ENCODE measurements at regions of chr16 and their contacts with region 1.

Region 1: GRCh38 chr16:1964506-1965395 is at the start of gene RPS2:
- H3K4me3 ChIP-seq: peak within 1 kb of the TSS; percentile 94
- H3K27ac ChIP-seq: peak within 1 kb of the TSS; percentile 100
- H3K4me1 ChIP-seq: no peaks in the 10 kb centered on the region; the same call in 1 of the 2 replicates
- CTCF ChIP-seq: no peak; the same call in 1 of the 2 replicates

Region 2: GRCh38 chr16:1782352-1783091 is 182.2 kb before region 1 on chr16 and contains the starts of genes NUBP2 and SPSB3:
- CTCF ChIA-PET with region 1: no interaction called
- POLR2A ChIA-PET with region 1: interaction called, 41 read pairs
- H3K4me3 ChIP-seq: peak within 1 kb of the TSS; percentile 90
- H3K27ac ChIP-seq: peak within 1 kb of the TSS; percentile 87
- H3K4me1 ChIP-seq: peaks cover 6% of the 10 kb centered on the region
- CTCF ChIP-seq: no peak

Region 3: GRCh38 chr16:1923299-1924034 is 41.3 kb before region 1 on chr16:
- CTCF ChIA-PET with region 1: interaction called, 4 read pairs
- POLR2A ChIA-PET with region 1: interaction called, 14 read pairs
- H3K4me3 ChIP-seq: no peak overlapping the region
- H3K27ac ChIP-seq: no peak overlapping the region; the same call in 1 of the 2 replicates
- H3K4me1 ChIP-seq: no peaks in the 10 kb centered on the region; the same call in 1 of the 2 replicates
- CTCF ChIP-seq: peak; percentile 90

Region 4: DNA sequence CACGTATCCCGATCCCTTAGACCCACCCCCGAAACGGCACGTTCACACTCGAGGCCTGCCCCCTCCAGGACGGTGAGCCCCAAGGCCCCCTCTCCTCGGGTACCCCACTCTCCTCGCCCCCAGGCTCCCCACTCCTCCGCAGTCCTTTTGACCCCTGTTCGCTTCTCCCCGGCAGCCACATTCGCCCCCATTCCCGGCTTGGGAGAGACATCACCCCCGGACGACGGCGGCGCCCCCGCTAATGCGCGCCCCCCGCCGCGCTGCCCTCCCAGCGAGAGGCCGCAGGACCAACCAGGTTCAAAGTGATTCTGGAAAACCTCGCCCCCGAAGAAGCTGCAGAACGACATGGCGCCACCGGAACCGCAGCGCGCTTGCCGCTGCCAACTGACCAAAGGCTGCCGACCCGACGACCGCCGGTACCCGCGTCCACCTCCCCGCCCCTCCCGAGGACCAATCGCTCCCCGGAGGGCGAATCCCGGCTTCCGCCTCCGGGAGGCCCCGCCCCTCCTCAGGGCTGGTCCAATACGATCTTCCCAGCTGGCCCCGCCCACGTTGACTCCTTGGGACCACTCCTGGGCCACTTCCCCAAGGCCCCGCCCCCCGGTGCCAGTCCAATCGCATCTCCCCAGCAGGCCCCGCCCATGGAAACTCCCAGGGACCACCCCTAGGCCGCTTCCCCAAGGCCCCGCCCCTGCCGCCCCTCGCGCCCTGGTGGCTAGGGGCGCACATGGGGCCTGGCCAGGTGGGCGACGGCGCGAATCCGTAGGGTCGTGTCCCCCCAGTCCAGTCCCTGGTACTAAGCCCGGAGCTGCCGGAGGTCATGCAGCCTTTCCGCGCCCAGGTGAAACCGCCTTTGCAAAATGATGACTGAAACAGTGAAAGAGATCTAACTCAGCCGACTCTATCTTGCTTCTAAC is 21.7 kb before region 1 on chr16 and contains the start of gene MSRB1:
- CTCF ChIA-PET with region 1: no interaction called
- POLR2A ChIA-PET with region 1: interaction called, 33 read pairs
- H3K4me3 ChIP-seq: peak within 1 kb of the TSS; percentile 67
- H3K27ac ChIP-seq: no peak within 1 kb of the TSS; the same call in 1 of the 2 replicates
- H3K4me1 ChIP-seq: no peaks in the 10 kb centered on the region
- CTCF ChIP-seq: peak; percentile 48; the same call in 1 of the 2 replicates

Region 5: DNA sequence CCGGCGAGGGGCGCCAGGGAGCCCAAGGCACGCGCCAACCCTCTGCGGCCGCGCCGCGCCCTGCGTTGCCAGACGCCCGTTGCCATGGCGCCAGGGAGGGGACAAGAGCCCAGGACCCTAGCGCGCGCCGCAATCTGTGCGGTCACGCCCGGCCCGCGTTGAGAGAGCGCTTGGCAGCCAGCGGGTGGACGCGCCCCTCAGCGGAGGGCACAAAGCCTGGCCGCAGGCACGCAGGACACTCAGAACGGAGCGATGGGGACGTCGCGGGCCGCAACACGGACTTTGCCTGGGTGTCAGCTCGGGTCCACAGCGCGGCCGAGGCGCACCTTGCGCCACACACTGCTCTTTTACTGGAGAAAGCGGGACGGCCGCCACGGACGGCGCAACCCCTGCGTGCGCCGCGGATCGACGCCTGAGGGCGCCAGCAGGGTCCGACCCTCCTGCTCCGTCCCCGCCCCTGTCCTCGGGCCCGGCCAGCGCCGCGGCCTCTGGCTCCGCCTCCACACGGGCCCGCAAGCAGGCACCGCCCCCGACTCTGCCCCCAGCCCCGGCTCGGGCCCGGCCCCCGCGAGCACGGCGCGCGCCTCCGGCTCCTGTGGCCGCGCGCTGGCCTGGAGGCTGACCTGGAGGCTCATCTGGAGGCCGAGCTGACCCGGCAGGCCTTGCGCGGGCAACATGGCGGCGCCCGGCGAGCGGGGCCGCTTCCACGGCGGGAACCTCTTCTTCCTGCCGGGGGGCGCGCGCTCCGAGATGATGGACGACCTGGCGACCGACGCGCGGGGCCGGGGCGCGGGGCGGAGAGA is 19.0 kb after region 1 on chr16 and contains the start of gene GFER:
- CTCF ChIA-PET with region 1: interaction called, 3 read pairs
- POLR2A ChIA-PET with region 1: interaction called, 76 read pairs
- H3K4me3 ChIP-seq: peak within 1 kb of the TSS; percentile 73
- H3K27ac ChIP-seq: peak within 1 kb of the TSS; percentile 83
- H3K4me1 ChIP-seq: peaks cover 7% of the 10 kb centered on the region; the same call in 1 of the 2 replicates
- CTCF ChIP-seq: peak; percentile 91

Region 6: GRCh38 chr16:2082160-2082982 is 117.6 kb after region 1 on chr16:
- CTCF ChIA-PET with region 1: no interaction called
- POLR2A ChIA-PET with region 1: no interaction called
- H3K4me3 ChIP-seq: no peak overlapping the region
- H3K27ac ChIP-seq: no peak overlapping the region
- H3K4me1 ChIP-seq: no peaks in the 10 kb centered on the region
- CTCF ChIP-seq: no peak